ENCODE measurements at regions of chr4 and their contacts with region 1.

Region 1: GRCh38 chr4:4507923-4508322 is 33.9 kb downstream of the STX18 start:
- H3K4me3 ChIP-seq: no peak overlapping the region
- H3K27ac ChIP-seq: no peak overlapping the region
- H3K4me1 ChIP-seq: no peaks in the 10 kb centered on the region
- CTCF ChIP-seq: no peak

Region 2: GRCh38 chr4:4488405-4489404 is 19.2 kb before region 1 on chr4:
- CTCF ChIA-PET with region 1: interaction called, 16 read pairs
- POLR2A ChIA-PET with region 1: no interaction called
- H3K4me3 ChIP-seq: no peak overlapping the region
- H3K27ac ChIP-seq: no peak overlapping the region
- H3K4me1 ChIP-seq: no peaks in the 10 kb centered on the region; the same call in 1 of the 2 replicates
- CTCF ChIP-seq: no peak

Region 3: DNA sequence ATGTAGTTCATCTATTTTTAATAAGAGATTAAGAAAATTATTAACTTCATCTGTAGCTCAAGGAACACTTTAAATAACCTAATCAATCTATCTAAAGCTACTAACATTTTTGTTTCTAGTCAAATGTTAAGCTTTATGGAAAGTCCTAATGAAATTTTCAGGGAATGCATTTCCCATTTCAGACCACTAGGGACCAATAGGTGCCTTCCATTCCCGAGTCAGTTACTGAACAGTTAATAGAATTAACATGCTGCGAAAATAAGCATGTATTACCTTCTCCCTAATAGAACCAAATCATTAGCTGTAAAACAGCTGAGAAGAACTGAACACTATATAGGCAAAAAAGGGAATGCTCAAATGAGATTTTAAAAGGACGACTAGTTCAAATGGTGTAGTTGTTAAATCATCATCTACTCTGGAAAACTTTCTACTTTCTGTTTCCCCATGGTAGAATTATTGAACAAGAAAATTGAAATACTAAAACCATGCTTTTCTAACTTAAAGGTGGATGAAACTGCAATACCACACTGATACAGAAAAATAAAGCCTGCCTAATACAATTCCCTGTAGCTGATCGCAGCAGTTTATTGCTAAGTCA is 11.5 kb after region 1 on chr4:
- CTCF ChIA-PET with region 1: interaction called, 14 read pairs
- POLR2A ChIA-PET with region 1: no interaction called
- H3K4me3 ChIP-seq: no peak overlapping the region
- H3K27ac ChIP-seq: no peak overlapping the region
- H3K4me1 ChIP-seq: 0 out of 2 replicates have a peak, but pooled peaks cover 4% of the 10 kb centered on the region
- CTCF ChIP-seq: no peak

Region 4: GRCh38 chr4:4888695-4889094 is 380.8 kb after region 1 on chr4:
- CTCF ChIA-PET with region 1: no interaction called
- POLR2A ChIA-PET with region 1: no interaction called
- H3K4me3 ChIP-seq: no peak overlapping the region
- H3K27ac ChIP-seq: no peak overlapping the region
- H3K4me1 ChIP-seq: no peaks in the 10 kb centered on the region
- CTCF ChIP-seq: no peak